Transverse colon (tissue), 4 donors: ENCODE measurements at regions of chr4 and their contacts with region 1.

Region 1: GRCh38 chr4:92236877-92237276 is 66.9 kb upstream of the GRID2 start:
- DNase-seq: no peak
- H3K4me3 ChIP-seq: no peak overlapping the region
- H3K27ac ChIP-seq: no peak overlapping the region
- H3K4me1 ChIP-seq: no peaks in the 10 kb centered on the region
- H3K27me3 ChIP-seq: no peaks in the 10 kb centered on the region
- CTCF ChIP-seq: no peak
- EP300 ChIP-seq: no peak
- POLR2A ChIP-seq: no peak

Region 2: GRCh38 chr4:92279296-92279695 is 42.4 kb after region 1 on chr4:
- in situ Hi-C with region 1: no loop called
- intact Hi-C with region 1: loop called (anchors 2 kb)
- DNase-seq: no peak
- H3K4me3 ChIP-seq: no peak overlapping the region
- H3K27ac ChIP-seq: no peak overlapping the region
- H3K4me1 ChIP-seq: no peaks in the 10 kb centered on the region
- H3K27me3 ChIP-seq: no peaks in the 10 kb centered on the region
- CTCF ChIP-seq: no peak
- EP300 ChIP-seq: no peak
- POLR2A ChIP-seq: no peak